ENCODE measurements at regions of chr5 and their contacts with region 1.

Region 1: GRCh38 chr5:38607396-38607795 is 51.0 kb upstream of the LIFR start:
- DNase-seq: no peak

Region 2: GRCh38 chr5:38473008-38473407 is 134.4 kb before region 1 on chr5:
- CTCF ChIA-PET with region 1: no interaction called
- POLR2A ChIA-PET with region 1: no interaction called
- DNase-seq: no peak

Region 3: GRCh38 chr5:38660194-38660668 is 52.8 kb after region 1 on chr5:
- CTCF ChIA-PET with region 1: no interaction called
- POLR2A ChIA-PET with region 1: interaction called, 10 read pairs
- DNase-seq: peak; percentile 63